GM13977 (cell line): ENCODE measurements at regions of chr2 and their contacts with region 1.

Region 1: DNA sequence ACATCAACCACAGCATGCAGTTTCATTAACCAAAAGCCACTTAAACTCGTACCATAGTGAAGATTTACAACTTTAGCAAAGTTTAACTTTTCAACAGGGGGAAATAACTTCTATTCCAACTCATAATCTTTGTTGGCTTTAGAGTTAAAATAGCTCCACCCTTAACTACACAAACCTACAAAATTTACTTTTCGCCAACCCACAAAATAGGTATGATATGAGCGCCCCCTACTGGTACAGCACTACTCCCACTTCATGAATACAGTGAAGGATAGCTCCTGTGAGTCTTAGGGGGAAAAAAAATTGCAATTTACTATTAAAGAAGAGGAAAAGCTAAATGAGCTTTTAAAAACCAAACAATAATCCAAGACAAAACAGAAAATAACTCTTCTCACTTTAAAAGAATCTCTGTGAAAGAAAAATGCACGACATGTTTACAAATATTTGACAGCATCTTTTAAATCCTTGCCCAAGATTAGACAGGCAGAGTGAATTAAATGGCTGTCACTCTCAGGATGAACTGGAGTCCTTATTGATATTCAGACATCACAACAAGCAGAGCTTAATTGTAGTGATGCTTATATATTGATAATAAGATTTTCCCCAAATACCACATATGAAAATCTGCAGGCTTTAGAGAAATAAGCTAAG is 32.2 kb downstream of the TMEFF2 start:
- DNase-seq: peak; percentile 4
- CTCF ChIP-seq: peak; percentile 80

Region 2: GRCh38 chr2:191566344-191566743 is 596.2 kb before region 1 on chr2:
- in situ Hi-C with region 1: loop called (anchors 10 kb)
- DNase-seq: peak; percentile 59
- CTCF ChIP-seq: peak; percentile 87

Region 3: GRCh38 chr2:191811807-191812602 is 350.5 kb before region 1 on chr2:
- in situ Hi-C with region 1: loop called (anchors 25 kb)
- DNase-seq: peak; percentile 25
- CTCF ChIP-seq: peak; percentile 76